Naive thymus-derived CD4-positive, alpha-beta T cell (primary cell): ENCODE measurements at regions of chr11 and their contacts with region 1.

Region 1: GRCh38 chr11:128422576-128423370 is 164.6 kb downstream of the ETS1 start:
- DNase-seq: peak; percentile 67 to 94 (median 82)
- ATAC-seq: peak; percentile 96
- H3K4me3 ChIP-seq: peak overlapping the region; percentile 25
- H3K4me3 Mint-ChIP-seq: peak overlapping the region; percentile 50 to 86 (median 68)
- H3K27ac ChIP-seq: peak overlapping the region; percentile 56
- H3K27ac Mint-ChIP-seq: peak overlapping the region; percentile 86 to 98 (median 94)
- H3K4me1 ChIP-seq: peaks cover 17 to 33% of the 10 kb centered on the region in 2 donors
- H3K4me1 Mint-ChIP-seq: peaks cover 30 to 86% (median 66%) of the 10 kb centered on the region in 7 donors
- H3K27me3 ChIP-seq: no peaks in the 10 kb centered on the region
- H3K27me3 Mint-ChIP-seq: no peaks in the 10 kb centered on the region

Region 2: GRCh38 chr11:128045094-128045725 is 377.6 kb before region 1 on chr11:
- CTCF ChIA-PET with region 1: no interaction called
- POLR2A ChIA-PET with region 1: no interaction called
- intact Hi-C with region 1: no loop called
- DNase-seq: no peak
- ATAC-seq: no peak
- H3K4me3 ChIP-seq: no peak overlapping the region
- H3K4me3 Mint-ChIP-seq: peak overlapping the region in 1 of 10 donors; percentile 57
- H3K27ac ChIP-seq: no peak overlapping the region
- H3K27ac Mint-ChIP-seq: peak overlapping the region in 2 of 9 donors; percentile 20 to 29
- H3K4me1 ChIP-seq: peaks cover 45 to 52% of the 10 kb centered on the region in 2 donors
- H3K4me1 Mint-ChIP-seq: peaks cover 33 to 73% (median 66%) of the 10 kb centered on the region in 7 donors
- H3K27me3 ChIP-seq: no peaks in the 10 kb centered on the region
- H3K27me3 Mint-ChIP-seq: no peaks in the 10 kb centered on the region

Region 3: GRCh38 chr11:128302425-128303186 is 120.2 kb before region 1 on chr11:
- CTCF ChIA-PET with region 1: interaction called, 3 read pairs
- POLR2A ChIA-PET with region 1: interaction called, 8 read pairs
- intact Hi-C with region 1: loop called in 1 of 2 experiments (anchors 1 kb)
- DNase-seq: peak; percentile 39 to 97 (median 92)
- ATAC-seq: peak; percentile 92
- H3K4me3 ChIP-seq: peak overlapping the region; percentile 52
- H3K4me3 Mint-ChIP-seq: peak overlapping the region; percentile 81 to 98 (median 93)
- H3K27ac ChIP-seq: peak overlapping the region; percentile 98
- H3K27ac Mint-ChIP-seq: peak overlapping the region; percentile 93 to 100 (median 98)
- H3K4me1 ChIP-seq: peaks cover 83 to 95% of the 10 kb centered on the region in 2 donors
- H3K4me1 Mint-ChIP-seq: peaks cover 52 to 92% (median 88%) of the 10 kb centered on the region in 7 donors
- H3K27me3 ChIP-seq: no peaks in the 10 kb centered on the region
- H3K27me3 Mint-ChIP-seq: no peaks in the 10 kb centered on the region

Region 4: DNA sequence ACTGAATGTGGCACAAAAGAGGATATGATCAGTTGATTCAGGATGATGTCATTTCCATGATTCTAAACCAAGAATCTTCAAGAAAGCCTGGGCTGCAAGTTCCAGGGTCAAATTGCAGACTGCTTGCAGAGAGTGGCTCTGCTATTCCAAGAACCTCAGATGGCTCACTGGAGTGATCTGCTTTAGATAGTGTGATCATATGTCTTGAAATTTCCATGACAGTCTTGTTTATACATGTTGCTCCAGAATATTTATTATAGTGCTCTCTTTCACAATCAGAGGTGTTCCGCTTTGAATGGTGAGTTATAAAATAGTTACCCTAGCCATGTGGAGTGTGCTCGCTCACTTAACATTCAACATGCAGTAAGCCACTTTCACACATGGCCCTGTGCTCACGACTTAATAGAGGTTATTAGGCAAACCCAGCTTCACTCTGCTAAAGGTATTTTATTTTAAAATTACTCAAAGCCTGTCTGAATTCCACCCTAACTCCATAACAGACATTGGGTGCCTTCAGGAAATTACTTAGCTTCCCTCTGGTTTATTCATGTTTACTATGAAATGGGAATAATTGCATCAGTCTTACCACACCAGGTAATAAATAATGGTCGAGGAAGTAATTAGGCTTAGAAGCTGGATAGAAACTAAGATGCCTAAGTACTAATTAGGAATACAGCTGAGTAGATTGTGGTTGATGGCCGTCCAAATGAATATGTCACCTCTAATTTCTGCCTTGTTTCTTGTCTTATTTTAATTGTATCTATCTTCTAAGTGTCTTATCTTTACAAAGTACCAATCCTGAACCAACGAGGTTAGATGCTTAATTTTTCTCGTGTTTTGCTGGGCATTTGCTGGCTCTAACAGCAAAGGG is 23.3 kb before region 1 on chr11:
- CTCF ChIA-PET with region 1: interaction called, 3 read pairs
- POLR2A ChIA-PET with region 1: interaction called, 12 read pairs
- intact Hi-C with region 1: loop called in 1 of 2 experiments (anchors 2 kb)
- DNase-seq: no peak
- ATAC-seq: peak; percentile 10
- H3K4me3 ChIP-seq: no peak overlapping the region
- H3K4me3 Mint-ChIP-seq: no peak overlapping the region
- H3K27ac ChIP-seq: peak overlapping the region; percentile 18
- H3K27ac Mint-ChIP-seq: peak overlapping the region in 3 of 9 donors; percentile 64 to 77 (median 67)
- H3K4me1 ChIP-seq: peaks cover 0 to 9% of the 10 kb centered on the region in 2 donors
- H3K4me1 Mint-ChIP-seq: peaks cover 4 to 47% (median 36%) of the 10 kb centered on the region in 7 donors
- H3K27me3 ChIP-seq: no peaks in the 10 kb centered on the region
- H3K27me3 Mint-ChIP-seq: peaks cover 0 to 3% (median 0%) of the 10 kb centered on the region in 5 donors

Region 5: GRCh38 chr11:128437137-128437536 is 14.4 kb after region 1 on chr11:
- CTCF ChIA-PET with region 1: no interaction called
- POLR2A ChIA-PET with region 1: interaction called, 10 read pairs
- intact Hi-C with region 1: loop called in 1 of 2 experiments (anchors 2 kb)
- DNase-seq: no peak
- ATAC-seq: no peak
- H3K4me3 ChIP-seq: no peak overlapping the region
- H3K4me3 Mint-ChIP-seq: no peak overlapping the region
- H3K27ac ChIP-seq: no peak overlapping the region
- H3K27ac Mint-ChIP-seq: peak overlapping the region in 1 of 9 donors; percentile 7
- H3K4me1 ChIP-seq: no peaks in the 10 kb centered on the region
- H3K4me1 Mint-ChIP-seq: peaks cover 8 to 40% (median 24%) of the 10 kb centered on the region in 7 donors
- H3K27me3 ChIP-seq: no peaks in the 10 kb centered on the region
- H3K27me3 Mint-ChIP-seq: no peaks in the 10 kb centered on the region